ENCODE measurements at regions of chr15 and their contacts with region 1.

Region 1: GRCh38 chr15:67175643-67176071 is 78.8 kb downstream of the AAGAB start:
- DNase-seq: peak; percentile 75
- ATAC-seq: peak; percentile 76
- H3K4me3 Mint-ChIP-seq: peak overlapping the region; percentile 4
- H3K27ac Mint-ChIP-seq: peak overlapping the region; percentile 92
- H3K4me1 Mint-ChIP-seq: peaks cover 65% of the 10 kb centered on the region
- H3K27me3 Mint-ChIP-seq: no peaks in the 10 kb centered on the region

Region 2: GRCh38 chr15:66497502-66498455 is 677.9 kb before region 1 on chr15 and contains the start of gene SNAPC5:
- CTCF ChIA-PET with region 1: no interaction called
- POLR2A ChIA-PET with region 1: no interaction called
- intact Hi-C with region 1: no loop called
- DNase-seq: peak; percentile 99
- ATAC-seq: peak; percentile 90
- H3K4me3 Mint-ChIP-seq: peak within 1 kb of the TSS; percentile 85
- H3K27ac Mint-ChIP-seq: peak within 1 kb of the TSS; percentile 93
- H3K4me1 Mint-ChIP-seq: peaks cover 56% of the 10 kb centered on the region
- H3K27me3 Mint-ChIP-seq: no peaks in the 10 kb centered on the region
- total RNA-seq, gene SNAPC5: 25.7 to 30.1 TPM

Region 3: DNA sequence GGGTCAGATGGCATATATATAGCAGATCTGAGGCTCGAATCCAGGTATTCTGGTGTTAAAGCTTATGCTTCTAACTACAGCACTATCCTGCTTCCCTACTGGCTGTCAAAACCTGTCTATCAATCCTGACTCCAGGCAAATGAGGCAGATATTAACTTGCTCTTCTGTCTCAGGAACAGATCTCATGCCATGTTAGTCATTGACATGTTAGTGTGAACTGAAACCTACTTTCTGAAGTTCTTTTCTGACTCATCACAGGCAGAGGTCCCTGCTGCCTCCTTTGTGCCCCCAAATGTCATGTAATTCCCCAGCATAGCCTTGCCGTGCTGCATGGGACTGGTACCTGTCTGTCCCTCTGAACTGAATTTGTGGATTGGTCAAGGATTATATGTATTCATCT is 235.3 kb before region 1 on chr15:
- CTCF ChIA-PET with region 1: no interaction called
- POLR2A ChIA-PET with region 1: no interaction called
- intact Hi-C with region 1: loop called in 1 of 2 experiments (anchors 5 kb)
- DNase-seq: peak; percentile 42
- ATAC-seq: peak; percentile 94
- H3K4me3 Mint-ChIP-seq: no peak overlapping the region
- H3K27ac Mint-ChIP-seq: no peak overlapping the region
- H3K4me1 Mint-ChIP-seq: peaks cover 14% of the 10 kb centered on the region
- H3K27me3 Mint-ChIP-seq: peaks cover 2% of the 10 kb centered on the region

Region 4: DNA sequence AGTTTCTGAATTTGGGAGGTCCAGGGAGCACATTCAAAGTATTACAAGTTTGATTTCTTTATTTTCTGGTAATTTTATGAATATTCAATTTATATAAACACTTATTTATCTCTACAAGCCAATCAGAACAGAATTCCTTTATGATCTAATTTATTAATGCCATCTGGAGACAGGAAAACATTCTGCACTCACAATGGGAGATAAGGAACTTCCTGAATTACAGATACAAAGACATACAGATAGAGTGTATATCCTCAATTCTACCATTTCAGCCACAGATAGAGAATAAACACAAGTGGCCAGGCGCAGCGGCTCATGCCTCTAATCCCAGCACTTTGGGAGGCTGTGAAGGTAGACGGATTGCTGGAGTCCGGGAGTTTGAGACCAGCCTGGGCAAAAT is 165.0 kb after region 1 on chr15:
- CTCF ChIA-PET with region 1: no interaction called
- POLR2A ChIA-PET with region 1: no interaction called
- intact Hi-C with region 1: no loop called
- DNase-seq: no peak
- ATAC-seq: no peak
- H3K4me3 Mint-ChIP-seq: no peak overlapping the region
- H3K27ac Mint-ChIP-seq: no peak overlapping the region
- H3K4me1 Mint-ChIP-seq: no peaks in the 10 kb centered on the region
- H3K27me3 Mint-ChIP-seq: no peaks in the 10 kb centered on the region

Measured in activated CD4-positive, alpha-beta T cell treated with anti-CD3 and anti-CD28 coated beads for 36 hours (primary cell).